ENCODE measurements at regions of chr4 and their contacts with region 1.

Region 1: GRCh38 chr4:13654158-13654797 is 26.8 kb upstream of the BOD1L1 start:
- DNase-seq: no peak
- H3K4me3 ChIP-seq: peak overlapping the region; percentile 72
- CTCF ChIP-seq: peak; percentile 99

Region 2: GRCh38 chr4:13627606-13628301 is 26.5 kb before region 1 on chr4 and contains the start of gene BOD1L1:
- CTCF ChIA-PET with region 1: interaction called, 22 read pairs
- POLR2A ChIA-PET with region 1: no interaction called
- DNase-seq: peak; percentile 69
- H3K4me3 ChIP-seq: peak within 1 kb of the TSS; percentile 88
- CTCF ChIP-seq: peak; percentile 77

Region 3: DNA sequence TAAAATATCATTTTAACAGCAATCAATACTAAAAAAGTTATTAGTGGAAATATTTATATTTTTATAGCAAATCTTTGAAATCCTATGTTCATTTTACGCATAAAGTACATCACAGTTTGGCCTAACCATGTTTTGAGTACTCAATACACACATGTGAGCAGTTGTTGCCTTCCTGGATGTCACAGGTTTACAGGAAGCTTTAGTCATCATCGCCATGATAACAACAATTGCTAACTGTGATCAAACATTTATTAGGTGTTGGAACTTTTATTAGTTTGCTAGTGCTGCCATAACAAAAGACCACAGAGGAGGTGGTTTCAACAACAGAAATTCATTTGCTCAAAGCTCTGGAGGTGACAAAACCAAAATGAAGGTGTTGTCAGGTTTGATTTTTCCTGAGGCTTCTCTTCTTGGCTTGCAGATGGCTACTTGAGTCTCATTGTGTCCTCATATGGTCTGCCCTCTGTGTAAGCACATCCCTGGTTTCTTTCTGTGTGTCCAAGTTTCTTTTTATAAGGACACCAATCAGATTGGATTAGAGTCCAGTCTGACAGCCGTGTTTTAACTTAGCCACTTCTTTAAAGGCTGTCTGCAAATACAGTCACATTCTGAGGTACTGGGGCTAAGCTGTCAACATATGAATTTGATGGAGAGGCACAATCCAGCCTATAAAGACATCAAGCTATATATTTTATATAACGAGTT is 16.3 kb after region 1 on chr4:
- CTCF ChIA-PET with region 1: interaction called, 38 read pairs
- POLR2A ChIA-PET with region 1: no interaction called
- DNase-seq: no peak
- H3K4me3 ChIP-seq: no peak overlapping the region
- CTCF ChIP-seq: no peak

Region 4: GRCh38 chr4:13888112-13888511 is 233.8 kb after region 1 on chr4:
- CTCF ChIA-PET with region 1: interaction called, 10 read pairs
- POLR2A ChIA-PET with region 1: no interaction called
- DNase-seq: peak; percentile 84
- H3K4me3 ChIP-seq: no peak overlapping the region
- CTCF ChIP-seq: no peak

Region 5: DNA sequence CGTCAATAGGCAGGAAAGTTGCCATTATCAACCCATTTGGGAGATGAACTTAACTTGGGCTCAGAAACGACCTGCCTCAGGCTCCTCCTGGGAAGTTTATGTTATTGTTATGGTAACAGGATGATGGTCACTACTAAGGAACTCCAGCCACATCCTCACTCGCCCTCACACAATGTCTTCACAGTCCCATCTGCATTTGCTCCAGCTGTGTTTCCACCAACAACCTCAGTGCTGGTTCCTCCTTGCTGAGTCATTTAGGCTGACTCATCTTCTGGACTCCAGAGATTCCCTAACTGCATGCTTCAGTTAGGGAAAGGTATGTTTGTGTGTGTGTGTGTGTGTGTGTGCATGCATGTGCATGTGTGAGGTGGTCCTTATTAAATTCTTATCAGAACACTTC is 266.6 kb after region 1 on chr4:
- CTCF ChIA-PET with region 1: interaction called, 64 read pairs
- POLR2A ChIA-PET with region 1: interaction called, 3 read pairs
- DNase-seq: peak; percentile 100
- H3K4me3 ChIP-seq: no peak overlapping the region
- CTCF ChIP-seq: no peak

Region 6: GRCh38 chr4:13988353-13989305 is 334.4 kb after region 1 on chr4:
- CTCF ChIA-PET with region 1: interaction called, 17 read pairs
- POLR2A ChIA-PET with region 1: no interaction called
- DNase-seq: peak; percentile 92
- H3K4me3 ChIP-seq: no peak overlapping the region
- CTCF ChIP-seq: no peak

Region 7: GRCh38 chr4:15001869-15002658 is 1347.8 kb after region 1 on chr4 and contains the start of gene CPEB2:
- CTCF ChIA-PET with region 1: interaction called, 12 read pairs
- POLR2A ChIA-PET with region 1: interaction called, 3 read pairs
- DNase-seq: peak; percentile 59
- H3K4me3 ChIP-seq: peak within 1 kb of the TSS; percentile 82
- CTCF ChIP-seq: no peak

Measured in AG04449 (cell line).